Activated CD8-positive, alpha-beta memory T cell treated with anti-CD3 and anti-CD28 coated beads, Interleukin-2, amount 10 ng/mL, durations not matched to agents 7 days and 5 days (primary cell): ENCODE measurements at regions of chr17 and their contacts with region 1.

Region 1: DNA sequence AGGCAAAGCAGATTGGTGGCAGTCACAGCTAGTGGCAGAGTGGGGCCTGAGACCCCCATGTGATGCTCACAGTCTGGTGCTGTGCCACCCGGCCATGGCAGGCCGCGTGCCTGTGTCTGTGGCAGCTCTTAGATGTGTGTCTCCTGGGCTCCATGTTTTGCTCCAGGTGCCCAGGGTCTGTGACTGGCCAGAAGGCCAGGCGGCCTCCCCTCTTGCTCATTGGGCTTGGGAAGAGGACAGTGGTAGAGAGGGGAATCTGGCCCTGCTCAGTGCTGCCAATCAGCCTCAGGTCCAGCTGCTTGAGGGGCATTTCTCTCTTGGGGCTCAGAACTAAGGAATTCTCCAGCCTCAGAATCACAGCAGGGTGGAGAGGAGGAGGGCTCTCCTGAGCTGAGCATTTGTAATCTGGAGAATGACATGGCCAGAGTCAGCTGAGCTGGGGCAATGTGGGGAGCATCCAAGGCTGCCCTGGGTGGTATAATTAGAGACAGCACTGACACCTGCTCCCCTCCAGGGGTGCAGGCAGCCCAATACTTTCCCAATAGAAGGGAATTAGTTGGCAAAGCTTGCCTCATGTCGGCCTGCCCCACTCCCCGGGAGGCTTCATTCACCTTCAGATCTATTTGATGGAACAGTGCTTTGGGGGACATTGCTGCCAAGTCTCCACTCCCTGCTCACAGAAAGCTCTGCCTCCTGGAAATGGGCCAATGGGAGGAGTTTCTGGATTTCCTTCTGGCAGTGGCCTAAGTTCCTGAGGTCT is 2.7 kb upstream of the LASP1NB start:
- DNase-seq: peak; percentile 40
- ATAC-seq: no peak
- H3K4me3 Mint-ChIP-seq: no peak overlapping the region
- H3K27ac Mint-ChIP-seq: no peak overlapping the region
- H3K4me1 Mint-ChIP-seq: peaks cover 34% of the 10 kb centered on the region
- H3K27me3 Mint-ChIP-seq: no peaks in the 10 kb centered on the region

Region 2: GRCh38 chr17:38879878-38880682 is 42.6 kb before region 1 on chr17:
- CTCF ChIA-PET with region 1: interaction called, 10 read pairs
- DNase-seq: no peak
- ATAC-seq: no peak
- H3K4me3 Mint-ChIP-seq: peak overlapping the region; percentile 34
- H3K27ac Mint-ChIP-seq: peak overlapping the region; percentile 87
- H3K4me1 Mint-ChIP-seq: peaks cover 86% of the 10 kb centered on the region
- H3K27me3 Mint-ChIP-seq: no peaks in the 10 kb centered on the region

Region 3: GRCh38 chr17:38898812-38899348 is 23.8 kb before region 1 on chr17:
- CTCF ChIA-PET with region 1: interaction called, 55 read pairs
- DNase-seq: peak; percentile 94
- ATAC-seq: peak; percentile 73
- H3K4me3 Mint-ChIP-seq: peak overlapping the region; percentile 70
- H3K27ac Mint-ChIP-seq: peak overlapping the region; percentile 98
- H3K4me1 Mint-ChIP-seq: peaks cover 74% of the 10 kb centered on the region
- H3K27me3 Mint-ChIP-seq: no peaks in the 10 kb centered on the region

Region 4: DNA sequence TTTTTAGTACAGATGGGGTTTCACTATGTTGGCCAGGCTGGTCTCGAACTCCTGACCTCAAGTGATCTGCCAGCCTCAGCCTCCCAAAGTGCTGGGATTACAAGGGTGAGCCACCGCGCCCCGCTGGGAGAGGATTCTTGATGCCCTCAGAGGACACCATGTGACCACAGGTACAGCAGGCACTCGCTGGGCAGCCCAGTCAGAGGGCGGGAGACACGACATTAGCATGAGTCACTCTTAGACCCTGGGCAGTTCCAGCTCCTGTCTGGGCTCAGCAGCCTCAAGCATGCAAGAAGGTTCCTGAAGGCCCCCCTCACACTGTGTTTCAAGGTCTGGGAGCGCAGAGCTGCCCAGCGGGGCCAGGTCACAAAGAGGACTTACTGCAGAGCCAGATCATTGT is 291.1 kb after region 1 on chr17:
- CTCF ChIA-PET with region 1: no interaction called
- DNase-seq: no peak
- ATAC-seq: no peak
- H3K4me3 Mint-ChIP-seq: no peak overlapping the region
- H3K27ac Mint-ChIP-seq: no peak overlapping the region
- H3K4me1 Mint-ChIP-seq: peaks cover 7% of the 10 kb centered on the region
- H3K27me3 Mint-ChIP-seq: peaks cover 45% of the 10 kb centered on the region